Activated T-helper 2 cell treated with anti-CD3 and anti-CD28 coated beads, Interferon-gamma antibody, Interleukin-2, Interleukin-4, amounts not matched to agents 10 μg/mL and 5 μg/mL and 100 μg/mL, durations not matched to agents 14 hours and 24 hours and 36 hours (primary cell): ENCODE measurements at regions of chr2 and their contacts with region 1.

Region 1: GRCh38 chr2:204842661-204843485 is 297.6 kb downstream of the PARD3B start:
- DNase-seq: no peak
- H3K4me3 Mint-ChIP-seq: no peak overlapping the region
- H3K27ac Mint-ChIP-seq: no peak overlapping the region
- H3K4me1 Mint-ChIP-seq: peaks cover 31% of the 10 kb centered on the region
- H3K27me3 Mint-ChIP-seq: peaks cover 46% of the 10 kb centered on the region

Region 2: DNA sequence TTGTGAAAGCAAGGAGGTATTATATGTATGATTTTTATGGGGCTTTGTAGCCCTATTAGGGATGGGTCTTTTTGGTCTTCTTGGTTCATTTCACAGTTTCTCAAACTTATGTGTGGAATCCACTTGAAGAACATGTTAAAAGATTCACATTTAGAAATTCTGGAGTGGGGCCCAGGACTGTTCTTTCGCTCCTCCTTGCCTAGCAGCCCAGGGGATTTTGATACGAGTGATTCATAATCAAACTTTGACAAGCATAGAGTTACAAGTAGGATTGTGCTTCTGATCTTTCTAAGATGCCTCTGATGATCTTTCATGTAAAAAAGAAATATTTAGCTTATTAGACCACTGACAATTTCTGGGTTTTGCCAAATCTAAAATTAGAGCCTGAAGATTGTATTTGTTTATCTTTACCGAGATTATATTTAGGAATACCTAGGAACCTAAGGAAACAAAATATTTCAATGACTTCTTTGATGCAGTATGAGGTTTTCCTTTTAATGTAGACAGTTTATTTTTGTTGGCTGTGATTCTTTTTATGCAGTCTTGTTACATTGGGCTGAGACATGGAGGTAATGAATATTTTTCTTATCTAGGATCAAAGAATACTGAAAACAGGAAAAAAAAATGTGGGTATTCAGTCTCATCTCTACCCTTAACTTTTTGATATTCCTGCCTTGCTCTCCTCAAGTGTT is 26.4 kb after region 1 on chr2:
- intact Hi-C with region 1: no loop called
- DNase-seq: no peak
- H3K4me3 Mint-ChIP-seq: no peak overlapping the region
- H3K27ac Mint-ChIP-seq: no peak overlapping the region
- H3K4me1 Mint-ChIP-seq: peaks cover 27% of the 10 kb centered on the region
- H3K27me3 Mint-ChIP-seq: peaks cover 45% of the 10 kb centered on the region

Region 3: DNA sequence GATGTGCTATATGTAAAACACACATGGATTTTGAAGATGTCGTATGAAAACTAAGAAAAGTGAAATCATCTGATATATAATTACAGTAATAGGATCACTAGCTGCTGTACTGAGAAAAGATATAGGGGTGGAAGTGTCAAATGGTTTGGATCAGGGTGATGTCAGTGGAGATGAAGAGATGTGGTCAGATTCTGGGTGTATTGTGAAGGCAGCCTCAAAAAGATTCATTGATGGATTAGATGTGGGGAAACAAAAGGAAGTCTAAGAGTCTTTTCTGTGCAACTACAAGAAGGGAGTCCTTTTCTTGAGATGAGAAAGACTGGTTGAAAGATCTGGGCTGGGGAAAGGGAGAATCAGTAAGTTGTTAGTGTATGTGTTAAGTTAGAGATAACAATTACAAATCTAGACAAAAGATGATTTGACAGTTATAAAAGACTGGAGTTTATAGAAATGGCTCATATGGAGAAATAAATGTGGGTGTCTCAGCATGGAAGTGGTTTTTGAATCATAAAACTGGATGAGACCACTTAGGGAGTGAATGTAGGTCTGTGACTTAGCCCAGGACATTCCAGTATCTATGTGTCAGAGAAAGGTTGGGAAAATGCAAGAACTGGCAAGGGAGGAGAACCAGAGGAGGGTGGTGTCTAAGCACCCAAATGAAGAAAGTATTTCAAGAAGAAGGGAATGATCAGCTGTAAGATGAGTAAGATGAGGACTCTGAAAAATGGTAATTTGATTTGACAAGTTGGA is 49.8 kb after region 1 on chr2:
- intact Hi-C with region 1: loop called (anchors 2 kb)
- DNase-seq: peak; percentile 17
- H3K4me3 Mint-ChIP-seq: no peak overlapping the region
- H3K27ac Mint-ChIP-seq: no peak overlapping the region
- H3K4me1 Mint-ChIP-seq: peaks cover 14% of the 10 kb centered on the region
- H3K27me3 Mint-ChIP-seq: no peaks in the 10 kb centered on the region